ENCODE measurements at regions of chr21 and their contacts with region 1.

Region 1: GRCh38 chr21:41564871-41565274 is 56.9 kb upstream of the TMPRSS2 start:
- DNase-seq: no peak
- ATAC-seq: peak in 2 of 4 donors; percentile 60 to 78
- H3K4me3 ChIP-seq: no peak overlapping the region
- H3K27ac ChIP-seq: no peak overlapping the region
- H3K4me1 ChIP-seq: peaks cover 0 to 14% (median 0%) of the 10 kb centered on the region in 4 donors
- H3K27me3 ChIP-seq: no peaks in the 10 kb centered on the region
- CTCF ChIP-seq: no peak
- POLR2A ChIP-seq: no peak

Region 2: DNA sequence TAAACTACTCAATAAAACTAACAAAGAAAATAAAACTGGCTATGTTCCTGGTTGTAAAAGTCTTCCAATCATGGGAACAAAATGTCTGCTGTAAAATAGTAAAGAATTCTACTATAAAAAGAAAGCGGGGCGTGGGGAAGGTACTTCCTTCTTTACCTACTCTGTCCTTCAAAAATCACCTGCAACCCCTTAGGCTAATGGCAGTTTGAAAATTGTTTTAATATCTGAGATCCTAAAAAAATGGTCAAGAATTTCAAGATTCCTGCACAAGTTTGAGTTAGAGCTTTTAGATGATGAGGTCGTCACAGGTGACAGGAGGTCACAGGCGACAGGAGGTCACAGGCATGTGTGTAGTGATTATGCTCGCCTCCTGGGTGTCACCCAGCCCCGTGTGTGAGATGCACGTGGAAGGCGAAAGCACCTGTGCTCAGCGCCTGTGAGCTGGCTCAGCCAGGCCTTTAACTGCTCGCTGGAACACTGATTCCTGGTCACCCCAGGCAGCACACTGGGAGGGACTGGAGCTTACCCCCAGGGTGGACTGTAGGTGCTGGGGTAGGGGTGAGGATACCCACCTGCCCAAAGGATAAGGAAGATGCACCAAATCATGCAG is 38.3 kb before region 1 on chr21:
- intact Hi-C with region 1: loop called in 1 of 2 experiments (anchors 5 kb)
- DNase-seq: peak; percentile 58 to 85 (median 79)
- ATAC-seq: peak; percentile 60 to 87 (median 83)
- H3K4me3 ChIP-seq: no peak overlapping the region
- H3K27ac ChIP-seq: peak overlapping the region; percentile 67 to 89 (median 83)
- H3K4me1 ChIP-seq: peaks cover 0 to 17% (median 6%) of the 10 kb centered on the region in 4 donors
- H3K27me3 ChIP-seq: no peaks in the 10 kb centered on the region
- CTCF ChIP-seq: no peak
- POLR2A ChIP-seq: no peak

Measured in right lobe of liver (tissue), 6 donors.